GM10248 (cell line): ENCODE measurements at regions of chr19 and their contacts with region 1.

Region 1: DNA sequence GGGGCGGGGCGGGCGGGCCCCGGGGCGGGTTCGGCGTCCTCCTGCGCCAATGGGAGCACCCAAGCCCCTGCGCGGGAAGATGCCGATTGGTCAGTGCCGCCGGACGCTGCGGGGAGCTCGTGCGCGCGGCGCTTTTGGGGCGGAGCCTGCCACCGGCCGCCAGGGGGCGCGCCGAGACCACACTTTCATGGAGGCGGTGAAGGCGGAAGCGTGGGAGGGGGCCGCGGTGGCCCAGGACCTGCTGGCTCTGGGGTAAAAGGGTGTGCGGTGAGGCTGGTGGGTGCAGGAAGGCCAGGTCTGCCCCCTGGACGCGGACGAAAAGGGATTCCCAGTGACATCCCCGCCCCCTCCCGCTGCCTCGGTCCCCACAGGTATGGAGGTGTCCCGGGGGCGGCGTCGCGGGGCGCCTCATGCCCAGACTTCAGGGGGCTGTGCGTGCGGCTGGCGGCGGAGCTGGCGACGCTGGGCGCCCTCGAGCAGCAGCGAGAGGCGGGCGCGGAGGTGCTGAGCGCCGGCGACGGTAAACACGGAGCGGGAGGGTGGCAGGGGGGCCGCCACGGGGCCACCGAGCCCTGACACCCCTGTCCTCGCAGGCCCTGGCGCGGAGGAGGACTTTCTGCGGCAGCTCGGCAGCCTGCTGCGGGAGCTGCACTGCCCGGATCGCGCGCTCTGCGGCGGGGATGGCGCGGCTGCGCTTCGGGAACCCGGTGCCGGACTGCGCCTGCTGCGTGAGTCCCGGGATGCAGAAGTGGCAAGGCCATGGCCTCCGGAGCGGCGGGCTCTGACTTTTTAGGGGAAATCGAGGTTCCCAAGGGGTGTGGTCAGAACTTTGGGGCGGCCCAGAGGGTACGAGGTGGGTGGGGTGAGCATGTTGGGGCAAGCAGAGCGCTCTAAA is at the start of gene FAM98C:
- DNase-seq: peak; percentile 100
- CTCF ChIP-seq: peak; percentile 97

Region 2: DNA sequence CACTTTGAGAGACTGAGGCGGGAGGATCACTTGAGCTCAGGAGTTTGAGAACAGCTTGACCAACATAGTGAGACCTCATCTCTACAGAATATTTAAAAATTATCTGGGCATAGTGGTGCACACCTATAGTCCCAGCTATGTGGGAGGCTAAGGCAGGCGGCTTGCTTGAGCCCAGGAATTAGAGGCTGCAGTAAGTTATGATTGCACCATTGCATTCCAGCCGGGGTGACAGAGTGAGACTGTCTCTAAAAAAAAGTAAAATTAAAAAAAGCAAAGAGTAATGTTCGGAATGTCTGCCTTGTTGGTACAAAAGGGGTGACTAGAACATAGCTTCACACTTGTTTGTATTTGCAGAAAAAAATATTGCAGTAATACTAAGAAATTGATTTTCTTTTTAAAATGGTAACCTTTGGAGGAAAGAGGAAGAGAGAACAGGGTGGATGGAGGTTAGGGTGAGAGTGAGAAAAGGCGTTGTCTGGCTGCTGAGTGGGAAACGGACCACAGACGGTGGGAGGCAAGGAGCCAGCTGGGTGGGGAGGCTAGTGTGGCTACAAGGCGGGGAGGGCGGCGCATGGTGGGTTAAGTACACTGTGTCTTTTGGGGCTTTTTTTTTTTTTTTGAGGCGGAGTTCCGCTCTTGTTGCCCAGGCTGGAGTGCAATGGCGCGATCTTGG is 157.3 kb before region 1 on chr19:
- CTCF ChIA-PET with region 1: interaction called, 11 read pairs
- POLR2A ChIA-PET with region 1: no interaction called
- DNase-seq: no peak
- CTCF ChIP-seq: no peak

Region 3: DNA sequence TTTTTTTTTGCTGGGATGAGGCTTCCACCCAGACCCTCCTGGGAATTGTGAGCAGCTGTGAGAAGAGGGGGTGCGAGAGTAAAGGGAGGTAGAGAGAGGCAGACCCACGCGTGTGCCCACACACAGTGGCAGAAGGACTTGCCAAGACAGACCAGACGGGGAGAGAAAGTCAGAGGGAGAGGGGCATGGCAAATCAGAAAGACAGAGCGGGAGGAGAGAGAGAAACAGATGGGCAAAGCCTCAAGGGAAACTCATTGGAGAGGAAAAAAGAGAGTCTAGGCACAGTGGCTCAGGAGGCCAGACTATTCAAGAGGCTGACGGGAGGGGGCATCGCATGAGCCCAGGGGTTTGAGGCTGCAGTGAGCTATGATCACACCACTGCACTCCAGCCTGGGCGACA is 50.6 kb before region 1 on chr19:
- CTCF ChIA-PET with region 1: no interaction called
- POLR2A ChIA-PET with region 1: no interaction called
- DNase-seq: no peak
- CTCF ChIP-seq: no peak

Region 4: DNA sequence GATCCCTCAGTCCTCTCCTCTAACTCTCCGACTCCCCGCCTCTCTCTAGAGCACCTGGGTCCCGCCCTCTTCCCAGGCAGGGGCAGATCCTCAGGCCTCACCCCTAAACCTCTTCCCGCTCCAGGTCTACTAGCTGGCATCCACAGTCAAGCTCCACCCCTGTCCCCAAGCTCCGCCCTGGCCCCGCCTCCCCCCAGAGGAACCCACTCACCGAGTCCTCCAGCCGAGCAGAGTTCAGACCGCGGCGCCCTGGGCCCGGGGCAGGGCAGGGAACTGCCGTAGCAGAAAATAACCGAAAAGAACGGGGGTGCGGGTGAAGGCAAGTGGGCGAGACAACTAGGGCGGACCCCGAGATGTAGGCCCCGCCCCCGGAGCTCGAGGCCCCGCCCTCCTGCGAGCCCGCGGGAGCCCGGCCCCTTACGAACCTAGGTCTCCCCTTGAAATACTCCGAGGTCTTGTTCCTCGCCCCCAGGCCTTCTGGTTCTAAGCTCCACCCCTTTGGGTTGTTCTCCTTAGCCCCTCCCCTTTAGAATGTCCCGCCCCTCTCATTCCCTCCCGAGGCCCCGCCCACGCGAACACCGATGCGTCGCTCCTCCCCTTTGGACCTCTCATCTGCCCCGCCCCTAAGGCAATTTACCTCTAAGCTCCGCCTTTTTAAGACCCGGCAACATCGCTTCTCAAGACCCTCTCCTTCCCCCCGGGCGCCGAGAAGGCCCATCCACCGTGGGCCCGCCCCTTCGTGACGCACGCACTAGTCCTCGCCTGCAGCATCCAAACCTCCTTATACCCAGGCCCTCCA is 15.5 kb before region 1 on chr19 and contains the start of gene GGN:
- CTCF ChIA-PET with region 1: interaction called, 43 read pairs
- POLR2A ChIA-PET with region 1: interaction called, 11 read pairs
- DNase-seq: peak; percentile 87
- CTCF ChIP-seq: no peak

Region 5: DNA sequence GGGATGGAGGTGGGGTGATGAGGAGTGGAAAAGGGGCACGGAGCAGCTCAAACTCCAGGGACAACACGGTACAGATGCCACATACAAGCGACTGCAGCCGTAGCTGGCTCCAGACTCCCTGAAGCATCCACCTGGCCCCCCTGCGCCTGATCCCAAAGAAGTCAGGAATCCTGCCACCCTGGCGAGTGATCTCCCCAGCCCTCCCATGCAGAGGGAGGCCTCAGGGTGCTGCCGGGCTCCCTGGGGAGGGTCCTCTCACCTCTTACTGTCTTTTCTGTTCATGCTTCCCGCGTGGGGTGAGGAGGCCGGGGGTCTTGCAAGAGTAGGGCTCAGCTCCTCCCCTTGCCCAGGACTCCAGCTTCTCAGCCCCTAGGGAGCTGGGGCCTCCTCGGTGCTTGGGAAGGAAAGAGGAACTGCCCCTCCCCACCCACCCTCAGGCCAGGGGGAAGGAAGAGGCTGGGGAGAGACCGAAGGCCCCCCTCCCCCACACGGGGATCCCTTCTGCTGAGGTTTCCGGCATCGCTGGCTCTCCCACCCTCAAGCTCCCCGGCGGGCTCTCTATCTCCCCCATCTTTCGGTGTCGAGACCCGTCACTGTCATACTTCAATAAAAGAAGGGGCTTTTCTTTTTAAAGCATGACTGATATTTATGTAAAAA is 22.7 kb after region 1 on chr19 and contains the start of gene RASGRP4:
- CTCF ChIA-PET with region 1: interaction called, 29 read pairs
- POLR2A ChIA-PET with region 1: interaction called, 3 read pairs
- DNase-seq: peak; percentile 53
- CTCF ChIP-seq: no peak

Region 6: DNA sequence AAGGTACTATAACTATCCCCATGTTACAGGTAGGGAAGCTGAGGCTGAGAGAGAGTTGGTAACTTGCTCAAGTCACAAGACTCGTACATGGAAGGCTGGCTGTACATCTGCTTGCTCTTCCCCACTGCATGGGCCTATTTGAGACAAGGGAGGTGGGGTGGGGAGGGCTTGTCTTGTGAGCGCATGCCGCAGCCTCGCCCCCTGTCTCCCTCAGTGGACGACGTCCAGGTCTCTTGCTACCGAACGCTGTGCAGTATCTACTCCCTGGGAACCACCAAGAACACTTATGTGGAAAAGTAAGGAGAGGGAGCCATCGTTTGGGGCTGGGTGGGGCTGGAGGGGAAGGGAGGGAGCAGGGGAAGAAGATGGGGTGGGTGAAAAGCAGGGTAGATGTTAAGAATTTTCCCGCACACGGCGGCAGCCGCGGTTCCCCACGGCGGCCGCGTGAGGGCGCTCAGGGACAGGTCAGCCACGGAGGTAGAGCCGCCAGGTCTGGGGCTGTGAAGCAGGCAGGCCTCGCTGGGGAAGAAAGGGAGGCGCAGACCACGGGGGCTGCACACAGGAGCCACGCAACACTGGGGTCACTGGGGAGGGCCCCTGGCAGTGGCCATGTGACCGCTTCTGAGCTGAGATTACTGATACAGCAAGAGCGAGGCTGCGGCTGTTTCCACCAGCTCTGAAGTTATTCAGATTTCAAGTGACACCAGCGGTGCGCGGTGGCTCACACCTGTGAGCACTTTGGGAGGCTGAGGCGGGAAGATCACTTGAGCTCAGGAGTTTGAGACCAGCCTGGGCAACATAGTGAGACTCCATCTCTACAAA is 111.8 kb after region 1 on chr19:
- CTCF ChIA-PET with region 1: interaction called, 12 read pairs
- POLR2A ChIA-PET with region 1: no interaction called
- DNase-seq: peak; percentile 90
- CTCF ChIP-seq: peak; percentile 91

Region 7: GRCh38 chr19:38634757-38635482 is 231.7 kb after region 1 on chr19:
- CTCF ChIA-PET with region 1: interaction called, 19 read pairs
- POLR2A ChIA-PET with region 1: no interaction called
- DNase-seq: peak; percentile 82
- CTCF ChIP-seq: peak; percentile 83

Region 8: DNA sequence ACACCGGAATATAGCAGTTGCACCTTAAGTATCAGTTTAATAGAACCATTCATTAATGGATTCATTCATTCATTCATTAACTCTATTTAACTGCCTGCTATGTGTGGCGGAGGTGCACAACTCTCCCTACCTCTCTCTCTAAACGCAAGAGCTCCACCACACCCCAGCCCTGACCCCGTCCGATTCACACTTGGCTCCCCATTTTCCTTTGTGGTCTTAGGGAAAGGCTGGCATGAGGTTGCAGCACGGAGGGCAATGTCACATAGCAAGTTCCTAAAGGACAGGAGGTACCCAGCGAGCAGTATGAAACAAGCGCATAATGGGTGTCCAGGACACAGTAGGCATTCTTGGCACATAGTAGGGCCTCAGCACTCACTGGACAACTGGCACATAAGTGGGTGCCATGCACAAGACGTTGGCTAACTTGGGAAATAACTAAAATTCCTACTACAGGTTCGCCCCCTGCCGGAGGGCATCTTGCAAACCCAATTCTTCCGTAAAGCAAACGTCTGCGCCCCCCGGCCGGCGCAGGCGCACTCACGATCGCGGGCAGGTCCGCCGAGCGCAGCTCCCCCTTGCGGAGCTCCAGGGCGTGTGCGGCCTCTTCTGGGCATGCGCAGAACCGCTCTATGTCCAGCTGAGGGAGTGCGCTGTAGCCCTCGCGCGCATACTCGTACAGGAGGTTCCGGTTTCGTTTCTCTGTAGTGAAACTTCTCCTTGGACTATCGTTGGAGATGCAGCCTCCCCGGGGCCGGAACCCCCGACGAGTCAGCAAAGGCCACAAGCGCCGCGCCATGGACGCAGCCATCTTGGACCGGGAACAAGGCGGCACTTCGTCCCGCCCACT is 526.9 kb after region 1 on chr19 and contains the start of gene SARS2:
- CTCF ChIA-PET with region 1: interaction called, 17 read pairs
- POLR2A ChIA-PET with region 1: no interaction called
- DNase-seq: peak; percentile 97
- CTCF ChIP-seq: peak; percentile 95